ENCODE measurements at regions of chr11 and their contacts with region 1.

Region 1: DNA sequence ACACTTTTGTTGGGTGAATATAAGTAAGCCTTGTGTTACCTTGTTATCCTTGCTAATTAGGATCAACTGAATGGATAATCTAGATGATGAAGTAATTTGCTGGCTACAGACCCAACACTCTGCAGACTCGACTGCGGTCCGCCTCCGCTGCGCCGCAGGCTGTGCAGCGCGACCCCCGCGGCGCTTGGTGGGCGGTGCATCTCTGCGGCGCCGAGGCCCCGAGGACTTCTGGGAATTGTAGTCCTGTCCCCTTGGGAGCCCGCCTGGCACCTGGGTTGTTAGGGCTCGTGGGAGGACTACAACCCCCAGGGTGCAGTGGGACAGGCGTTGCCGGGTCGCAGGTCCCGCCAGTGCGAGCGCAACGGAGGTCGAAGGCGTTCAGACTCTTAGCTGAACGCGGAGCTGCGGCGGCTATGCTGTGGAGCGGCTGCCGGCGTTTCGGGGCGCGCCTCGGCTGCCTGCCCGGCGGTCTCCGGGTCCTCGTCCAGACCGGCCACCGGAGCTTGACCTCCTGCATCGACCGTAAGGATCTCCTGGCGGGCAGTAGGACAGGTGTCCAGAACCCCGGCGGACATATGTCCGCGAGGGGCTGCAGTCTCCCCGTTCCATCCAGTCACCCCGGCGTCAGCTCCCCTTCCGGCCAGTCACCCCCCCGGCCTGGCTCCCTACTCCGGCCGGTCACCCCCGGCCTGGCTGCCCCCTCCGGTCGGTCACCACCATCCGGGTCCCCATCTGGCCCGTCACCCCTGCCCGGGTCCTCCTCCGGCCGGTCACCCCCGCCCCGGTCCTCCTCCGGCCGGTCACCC is at the starts of genes ACAD8 and THYN1:
- DNase-seq: peak; percentile 83 to 98
- H3K4me3 ChIP-seq: peak within 1 kb of the TSS; percentile 82 to 84
- H3K27ac ChIP-seq: peak within 1 kb of the TSS; percentile 44 to 45
- H3K4me1 ChIP-seq: peaks cover 0 to 15% of the 10 kb centered on the region in 2 donors
- H3K27me3 ChIP-seq: no peaks in the 10 kb centered on the region
- CTCF ChIP-seq: peak in 2 of 3 experiments; percentile 31 to 45
- total RNA-seq, gene ACAD8: 28.6 TPM
- total RNA-seq, gene THYN1: 19.8 TPM

Region 2: DNA sequence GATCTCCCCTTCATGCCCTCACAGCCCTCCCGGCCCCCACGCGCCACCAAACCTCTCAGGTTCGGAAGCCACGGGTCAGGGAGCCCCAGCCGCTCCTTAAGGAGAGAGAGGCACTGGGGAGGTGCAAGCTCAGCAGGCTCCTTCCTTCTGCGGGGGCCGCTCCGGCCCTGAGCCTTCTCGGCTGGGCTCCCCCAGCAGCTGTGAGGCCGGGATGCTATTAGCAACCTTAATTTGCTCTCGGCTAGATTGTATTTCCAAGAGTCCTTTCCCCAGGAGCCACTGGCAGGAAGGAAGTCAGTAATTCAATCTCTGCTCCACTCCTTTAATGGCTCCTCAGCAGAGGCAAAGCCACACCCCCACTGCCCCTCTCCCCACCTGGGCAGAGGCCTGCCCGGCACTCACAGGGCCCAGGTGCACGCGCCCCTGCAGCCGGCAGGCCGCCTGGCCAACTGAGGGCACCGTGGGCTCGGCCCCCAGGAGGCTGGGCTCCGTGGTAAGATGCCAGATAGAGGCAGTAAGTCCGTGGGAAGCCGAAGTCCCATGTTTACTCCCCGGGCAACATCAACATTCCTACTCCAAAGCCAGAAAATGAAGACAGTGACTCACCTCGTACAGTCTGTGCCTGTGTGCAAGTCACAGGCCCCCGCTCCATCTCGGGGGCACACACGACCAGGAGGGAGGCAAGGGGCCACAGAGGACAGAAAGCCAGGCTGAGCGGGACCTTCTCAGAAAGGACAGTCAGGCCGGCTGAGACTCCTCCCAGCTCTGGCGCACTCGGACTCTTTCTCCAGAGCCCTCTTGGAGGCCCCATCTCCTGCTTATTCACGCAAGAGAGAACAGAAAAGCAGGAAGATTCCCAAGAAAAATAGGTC is 301.8 kb before region 1 on chr11:
- intact Hi-C with region 1: loop called (anchors 5 kb)
- DNase-seq: peak in 1 of 2 donors; percentile 78
- H3K4me3 ChIP-seq: peak overlapping the region; percentile 31 to 86
- H3K27ac ChIP-seq: peak overlapping the region; percentile 75 to 93
- H3K4me1 ChIP-seq: peaks cover 26 to 73% of the 10 kb centered on the region in 2 donors
- H3K27me3 ChIP-seq: no peaks in the 10 kb centered on the region
- CTCF ChIP-seq: no peak

Region 3: GRCh38 chr11:134231958-134232659 is 21.3 kb before region 1 on chr11:
- intact Hi-C with region 1: no loop called
- DNase-seq: peak in 1 of 2 donors; percentile 31
- H3K4me3 ChIP-seq: no peak overlapping the region
- H3K27ac ChIP-seq: no peak overlapping the region
- H3K4me1 ChIP-seq: peaks cover 0 to 2% of the 10 kb centered on the region in 2 donors
- H3K27me3 ChIP-seq: no peaks in the 10 kb centered on the region
- CTCF ChIP-seq: no peak

Region 4: DNA sequence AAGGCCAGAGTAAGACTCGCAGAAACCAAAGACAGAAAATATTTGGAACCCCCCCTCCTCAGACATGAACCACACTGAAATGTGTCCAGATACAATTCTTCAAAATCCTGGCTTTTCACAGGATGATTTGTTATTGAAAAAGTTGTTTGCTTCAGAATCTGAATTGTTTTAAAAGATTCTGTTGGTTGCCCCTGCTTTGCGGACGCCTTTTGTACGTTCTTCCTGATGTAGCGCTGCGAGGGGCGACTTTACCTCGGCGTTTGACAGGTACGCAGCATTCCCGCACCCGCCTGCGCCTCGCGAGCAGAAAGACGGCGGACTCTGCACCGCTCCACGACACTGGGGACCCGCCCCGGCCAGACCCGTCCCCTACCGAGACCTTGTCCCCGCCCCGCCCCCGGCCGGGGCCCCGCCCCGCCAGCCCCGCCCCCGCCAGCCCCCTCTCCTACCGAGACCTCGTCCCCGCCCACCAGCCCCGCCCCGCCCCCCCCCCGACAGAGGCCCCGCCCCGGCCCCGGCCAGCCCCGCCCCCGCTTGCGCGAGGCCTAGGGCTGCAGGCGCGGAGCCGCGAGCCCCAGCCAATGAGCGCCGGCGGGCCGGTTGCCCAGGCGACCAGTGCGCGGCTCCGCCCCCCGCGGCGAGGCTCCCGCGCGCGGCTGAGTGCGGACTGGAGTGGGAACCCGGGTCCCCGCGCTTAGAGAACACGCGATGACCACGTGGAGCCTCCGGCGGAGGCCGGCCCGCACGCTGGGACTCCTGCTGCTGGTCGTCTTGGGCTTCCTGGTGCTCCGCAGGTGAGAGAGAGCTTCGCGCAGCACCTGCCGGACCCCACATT is 78.2 kb after region 1 on chr11 and contains the start of gene GLB1L2:
- intact Hi-C with region 1: loop called (anchors 2 kb)
- DNase-seq: peak in 1 of 2 donors; percentile 80
- H3K4me3 ChIP-seq: peak within 1 kb of the TSS; percentile 58 to 61
- H3K27ac ChIP-seq: no peak within 1 kb of the TSS
- H3K4me1 ChIP-seq: peaks cover 0 to 8% of the 10 kb centered on the region in 2 donors
- H3K27me3 ChIP-seq: no peaks in the 10 kb centered on the region
- CTCF ChIP-seq: no peak
- total RNA-seq, gene GLB1L2: 1.7 TPM

Measured in ascending aorta (tissue), 2 donors.